ENCODE measurements at regions of chr1 and their contacts with region 1.

Region 1: DNA sequence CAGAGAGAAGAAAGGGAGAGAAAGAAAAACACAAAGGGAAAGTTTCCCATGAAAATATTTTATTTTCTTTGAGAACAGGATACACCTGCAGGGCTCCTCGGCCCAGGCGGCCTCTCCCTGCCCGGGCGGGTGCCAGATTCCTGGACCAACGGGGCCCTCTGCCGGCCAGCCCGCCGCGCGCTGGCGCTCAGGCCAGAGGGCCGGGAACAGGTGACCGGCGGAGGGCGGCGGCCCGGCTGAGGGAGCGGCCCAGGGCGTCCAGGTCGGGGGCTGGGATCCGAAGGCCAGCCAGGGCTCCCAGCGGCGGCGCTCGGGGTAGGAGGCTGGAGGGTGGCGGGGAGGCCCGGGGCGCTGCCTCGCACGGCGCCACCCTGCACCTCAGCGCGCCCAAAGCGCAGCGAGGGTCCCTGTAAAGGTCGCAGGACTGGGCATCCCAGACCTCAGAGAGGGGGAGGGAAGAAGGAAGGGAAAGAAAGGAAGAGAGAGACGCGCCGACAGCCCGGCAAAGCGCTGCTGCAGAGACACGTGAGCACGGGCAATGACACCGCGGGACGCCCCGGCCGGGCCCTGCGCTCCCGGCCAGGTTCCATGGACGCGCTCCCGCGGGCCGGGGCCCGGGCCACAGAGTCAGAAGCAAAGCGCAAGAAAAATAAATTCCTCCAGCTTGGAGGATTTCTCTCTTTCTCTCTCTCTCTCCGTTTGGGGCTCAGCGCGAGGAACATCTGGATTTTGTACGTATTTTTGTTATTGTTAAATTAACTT is 927 bp downstream of the WNT9A start:
- DNase-seq: peak; percentile 56 to 92 (median 78)
- ATAC-seq: peak; percentile 88
- H3K4me3 ChIP-seq: peak overlapping the region; percentile 27 to 41
- H3K27ac ChIP-seq: peak overlapping the region; percentile 44 to 58
- H3K4me1 ChIP-seq: peaks cover 12 to 30% of the 10 kb centered on the region in 2 donors
- H3K27me3 ChIP-seq: peaks cover 0 to 56% of the 10 kb centered on the region in 2 donors
- CTCF ChIP-seq: peak; percentile 62 to 68

Region 2: GRCh38 chr1:227489572-227489971 is 457.2 kb before region 1 on chr1:
- intact Hi-C with region 1: loop called in 1 of 2 experiments (anchors 10 kb)
- DNase-seq: no peak
- ATAC-seq: no peak
- H3K4me3 ChIP-seq: no peak overlapping the region
- H3K27ac ChIP-seq: no peak overlapping the region
- H3K4me1 ChIP-seq: no peaks in the 10 kb centered on the region
- H3K27me3 ChIP-seq: no peaks in the 10 kb centered on the region
- CTCF ChIP-seq: no peak

Region 3: DNA sequence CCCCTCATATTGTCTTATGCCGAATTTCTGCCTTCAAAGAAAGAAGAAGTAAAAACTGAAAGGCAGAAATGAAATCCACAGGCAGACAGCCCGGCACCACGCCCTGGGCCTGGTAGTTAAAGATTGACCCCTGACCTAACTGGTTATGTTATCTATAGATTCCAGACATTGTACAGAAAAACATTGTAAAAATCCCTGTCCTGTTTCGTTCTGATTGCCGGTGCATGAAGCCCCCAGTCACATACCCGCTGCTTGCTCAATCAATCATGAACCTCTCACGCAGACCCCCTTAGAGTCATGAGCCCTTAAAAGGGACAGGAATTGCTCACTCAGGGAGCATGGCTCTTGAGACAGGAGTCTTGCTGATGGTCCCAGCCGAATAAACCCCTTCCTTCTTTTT is 261.0 kb before region 1 on chr1:
- intact Hi-C with region 1: no loop called
- DNase-seq: no peak
- ATAC-seq: no peak
- H3K4me3 ChIP-seq: no peak overlapping the region
- H3K27ac ChIP-seq: no peak overlapping the region
- H3K4me1 ChIP-seq: no peaks in the 10 kb centered on the region
- H3K27me3 ChIP-seq: no peaks in the 10 kb centered on the region
- CTCF ChIP-seq: no peak

Region 4: DNA sequence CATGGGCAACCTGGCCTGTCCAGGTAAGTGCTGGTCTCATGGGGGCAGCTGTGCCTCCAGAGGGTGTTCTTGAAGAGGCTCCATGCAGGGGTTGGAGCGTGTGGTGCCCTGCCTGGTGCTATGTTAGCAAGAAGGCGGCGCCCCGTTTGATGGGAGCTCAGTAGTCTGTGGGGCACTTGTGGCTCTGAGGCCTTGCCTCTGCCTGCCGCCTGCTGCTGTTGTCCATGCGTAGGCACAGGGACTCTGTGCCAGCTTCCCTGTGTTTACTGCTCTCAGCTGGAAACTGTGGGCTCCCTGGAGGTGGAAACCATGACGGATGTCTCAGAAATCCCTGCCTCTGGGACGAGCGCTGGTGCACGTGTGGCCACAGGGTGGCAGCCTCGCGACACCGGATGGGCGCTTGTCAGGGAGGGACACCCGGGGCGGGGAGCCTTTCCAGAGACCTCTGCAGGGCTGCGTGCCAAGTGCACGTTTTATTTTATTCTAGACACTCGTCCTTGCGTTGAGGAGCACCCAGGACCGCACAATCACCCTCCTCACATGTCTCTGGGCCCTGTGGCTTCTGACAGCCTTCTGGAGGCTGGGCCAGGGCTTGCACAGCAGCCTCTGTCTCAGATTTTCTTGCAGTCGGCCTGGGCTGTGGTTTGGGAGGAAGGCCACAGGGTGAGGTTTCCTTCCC is 184.4 kb before region 1 on chr1:
- intact Hi-C with region 1: loop called (anchors 5 to 10 kb)
- DNase-seq: peak; percentile 72 to 93 (median 84)
- ATAC-seq: peak; percentile 94
- H3K4me3 ChIP-seq: no peak overlapping the region
- H3K27ac ChIP-seq: peak overlapping the region in 1 of 2 donors; percentile 45
- H3K4me1 ChIP-seq: peaks cover 11 to 31% of the 10 kb centered on the region in 2 donors
- H3K27me3 ChIP-seq: no peaks in the 10 kb centered on the region
- CTCF ChIP-seq: peak; percentile 82 to 84

Region 5: GRCh38 chr1:227816750-227817446 is 129.9 kb before region 1 on chr1:
- intact Hi-C with region 1: no loop called
- DNase-seq: peak in 1 of 4 donors; percentile 53
- ATAC-seq: no peak
- H3K4me3 ChIP-seq: no peak overlapping the region
- H3K27ac ChIP-seq: no peak overlapping the region
- H3K4me1 ChIP-seq: no peaks in the 10 kb centered on the region
- H3K27me3 ChIP-seq: no peaks in the 10 kb centered on the region
- CTCF ChIP-seq: no peak